HepG2 (cell line): ENCODE measurements at regions of chr3 and their contacts with region 1.

Region 1: GRCh38 chr3:128123538-128124368 is at the start of gene RUVBL1:
- DNase-seq: peak; percentile 94
- ATAC-seq: peak; percentile 99
- H3K4me3 ChIP-seq: peak within 1 kb of the TSS; percentile 93 to 97 (median 97)
- H3K27ac ChIP-seq: peak within 1 kb of the TSS; percentile 87
- H3K4me1 ChIP-seq: peaks cover 38% of the 10 kb centered on the region
- H3K27me3 ChIP-seq: no peaks in the 10 kb centered on the region
- CTCF ChIP-seq: no peak
- EP300 ChIP-seq: peak in 1 of 2 experiments; percentile 32; a peak in 1 of 4 replicates
- POLR2A ChIP-seq: peak; percentile 62 to 70; a peak in 3 of 4 replicates
- RAD21 ChIP-seq: no peak
- total RNA-seq, gene RUVBL1: 86.3 and 120 TPM in 2 replicates

Region 2: GRCh38 chr3:128095222-128095703 is 28.5 kb before region 1 on chr3:
- CTCF ChIA-PET with region 1: no interaction called
- POLR2A ChIA-PET with region 1: interaction called, 27 read pairs
- in situ Hi-C with region 1: no loop called
- intact Hi-C with region 1: no loop called
- DNase-seq: peak; percentile 68
- ATAC-seq: peak; percentile 96
- H3K4me3 ChIP-seq: no peak overlapping the region
- H3K27ac ChIP-seq: no peak overlapping the region
- H3K4me1 ChIP-seq: peaks cover 59% of the 10 kb centered on the region
- H3K27me3 ChIP-seq: no peaks in the 10 kb centered on the region
- CTCF ChIP-seq: peak; percentile 97
- EP300 ChIP-seq: no peak
- POLR2A ChIP-seq: no peak
- RAD21 ChIP-seq: peak; percentile 94

Region 3: GRCh38 chr3:128153156-128154041 is 29.6 kb after region 1 on chr3 and contains the start of gene EEFSEC:
- CTCF ChIA-PET with region 1: no interaction called
- POLR2A ChIA-PET with region 1: interaction called, 41 read pairs
- in situ Hi-C with region 1: no loop called
- intact Hi-C with region 1: loop called (anchors 2 kb)
- DNase-seq: peak; percentile 36
- ATAC-seq: peak; percentile 87
- H3K4me3 ChIP-seq: peak within 1 kb of the TSS; percentile 86 to 95 (median 87)
- H3K27ac ChIP-seq: peak within 1 kb of the TSS; percentile 99
- H3K4me1 ChIP-seq: peaks cover 49% of the 10 kb centered on the region
- H3K27me3 ChIP-seq: no peaks in the 10 kb centered on the region
- CTCF ChIP-seq: peak; percentile 26; the same call in 1 of the 2 replicates
- EP300 ChIP-seq: no peak; a peak in 1 of 4 replicates
- POLR2A ChIP-seq: peak; percentile 77 to 82; a peak in 3 of 4 replicates
- RAD21 ChIP-seq: peak; percentile 65
- total RNA-seq, gene EEFSEC: 6.4 and 7.9 TPM in 2 replicates